Activated CD4-positive, alpha-beta memory T cell treated with anti-CD3 and anti-CD28 coated beads for 36 hours (primary cell): ENCODE measurements at regions of chr2 and their contacts with region 1.

Region 1: GRCh38 chr2:113080134-113080533 is 12.4 kb downstream of the IL1F10 start:
- DNase-seq: peak; percentile 74
- H3K4me3 Mint-ChIP-seq: no peak overlapping the region
- H3K27ac Mint-ChIP-seq: no peak overlapping the region
- H3K4me1 Mint-ChIP-seq: peaks cover 11% of the 10 kb centered on the region
- H3K27me3 Mint-ChIP-seq: peaks cover 7% of the 10 kb centered on the region

Region 2: DNA sequence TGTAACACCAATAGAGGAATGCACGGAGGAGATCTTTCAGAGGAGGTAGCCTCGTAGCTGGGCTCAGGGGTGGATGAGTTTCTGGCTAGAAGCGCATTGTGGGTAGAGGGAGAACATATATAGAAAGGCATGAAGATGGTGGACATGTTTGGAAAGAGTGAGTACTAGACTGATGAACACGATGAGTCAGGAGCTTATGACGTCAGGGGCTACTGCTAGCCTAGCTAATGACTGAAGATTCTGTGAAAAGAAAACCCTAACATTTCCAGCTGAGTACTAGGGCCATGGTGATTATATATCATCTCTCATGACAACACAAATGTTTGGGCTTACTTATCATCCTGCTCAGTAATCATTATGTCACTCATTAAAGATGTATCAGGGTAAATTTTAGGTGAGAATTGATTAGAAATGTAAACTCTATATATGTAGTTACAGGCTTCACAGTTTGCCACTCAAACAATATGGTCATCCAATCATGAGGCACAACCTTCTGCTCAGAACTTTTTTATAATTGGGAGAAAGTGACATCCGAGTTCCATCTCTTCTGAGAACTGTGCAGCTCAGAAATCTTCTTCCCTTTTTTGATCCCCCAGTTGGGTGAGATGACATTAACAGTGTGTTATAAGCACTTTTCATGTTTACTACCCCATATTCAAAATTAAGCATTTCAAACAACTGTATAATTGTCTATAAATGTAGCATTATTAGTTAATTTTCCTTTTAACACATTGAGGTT is 25.1 kb after region 1 on chr2:
- CTCF ChIA-PET with region 1: interaction called, 12 read pairs
- POLR2A ChIA-PET with region 1: no interaction called
- intact Hi-C with region 1: loop called (anchors 2 kb)
- DNase-seq: peak; percentile 74
- H3K4me3 Mint-ChIP-seq: no peak overlapping the region
- H3K27ac Mint-ChIP-seq: peak overlapping the region; percentile 99
- H3K4me1 Mint-ChIP-seq: peaks cover 37% of the 10 kb centered on the region
- H3K27me3 Mint-ChIP-seq: peaks cover 8% of the 10 kb centered on the region

Region 3: GRCh38 chr2:113157118-113157896 is 77.2 kb after region 1 on chr2:
- CTCF ChIA-PET with region 1: interaction called, 12 read pairs
- POLR2A ChIA-PET with region 1: no interaction called
- intact Hi-C with region 1: no loop called
- DNase-seq: peak; percentile 66
- H3K4me3 Mint-ChIP-seq: peak overlapping the region; percentile 81
- H3K27ac Mint-ChIP-seq: peak overlapping the region; percentile 79
- H3K4me1 Mint-ChIP-seq: peaks cover 22% of the 10 kb centered on the region
- H3K27me3 Mint-ChIP-seq: no peaks in the 10 kb centered on the region

Region 4: GRCh38 chr2:113181258-113182051 is 101.3 kb after region 1 on chr2:
- CTCF ChIA-PET with region 1: interaction called, 17 read pairs
- POLR2A ChIA-PET with region 1: interaction called, 5 read pairs
- intact Hi-C with region 1: no loop called
- DNase-seq: no peak
- H3K4me3 Mint-ChIP-seq: no peak overlapping the region
- H3K27ac Mint-ChIP-seq: peak overlapping the region; percentile 55
- H3K4me1 Mint-ChIP-seq: peaks cover 95% of the 10 kb centered on the region
- H3K27me3 Mint-ChIP-seq: no peaks in the 10 kb centered on the region

Region 5: GRCh38 chr2:113203901-113204519 is 123.9 kb after region 1 on chr2:
- CTCF ChIA-PET with region 1: interaction called, 51 read pairs
- POLR2A ChIA-PET with region 1: no interaction called
- intact Hi-C with region 1: loop called (anchors 1 kb)
- DNase-seq: peak; percentile 85
- H3K4me3 Mint-ChIP-seq: no peak overlapping the region
- H3K27ac Mint-ChIP-seq: peak overlapping the region; percentile 79
- H3K4me1 Mint-ChIP-seq: peaks cover 10% of the 10 kb centered on the region
- H3K27me3 Mint-ChIP-seq: no peaks in the 10 kb centered on the region

Region 6: GRCh38 chr2:113390124-113390849 is 310.2 kb after region 1 on chr2:
- CTCF ChIA-PET with region 1: interaction called, 13 read pairs
- POLR2A ChIA-PET with region 1: no interaction called
- intact Hi-C with region 1: loop called (anchors 5 kb)
- DNase-seq: peak; percentile 59
- H3K4me3 Mint-ChIP-seq: peak overlapping the region; percentile 7
- H3K27ac Mint-ChIP-seq: peak overlapping the region; percentile 38
- H3K4me1 Mint-ChIP-seq: peaks cover 11% of the 10 kb centered on the region
- H3K27me3 Mint-ChIP-seq: peaks cover 9% of the 10 kb centered on the region